Activated T-helper 1 cell treated with anti-CD3 and anti-CD28 coated beads, Interleukin-12 subunit alpha, Interleukin-12 subunit beta, Interleukin-2, Interleukin-4 antibody, amounts not matched to agents 30 ng/mL and 10 ng/mL and 1 ng/mL, durations not matched to agents 14 hours and 24 hours and 36 hours (primary cell): ENCODE measurements at regions of chr14 and their contacts with region 1.

Region 1: DNA sequence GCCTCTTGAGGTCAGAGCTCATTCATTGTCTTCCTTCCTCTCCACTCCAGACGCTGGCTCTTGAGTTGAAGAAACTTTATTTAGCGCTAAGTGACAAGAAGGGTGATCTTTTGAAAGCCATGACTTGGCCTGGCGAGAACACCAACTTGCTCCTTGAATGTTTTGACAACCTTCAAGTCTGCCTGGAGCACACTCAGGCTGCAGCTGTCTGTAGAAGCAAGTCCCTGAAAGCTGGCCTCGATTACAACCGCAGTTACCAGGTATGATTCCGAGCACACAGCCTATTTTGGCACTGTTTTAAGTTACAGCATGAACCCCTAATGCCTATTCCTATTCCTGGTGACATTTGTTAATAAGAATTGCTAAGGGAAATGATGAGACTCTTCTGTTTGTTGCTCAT is 167.6 kb downstream of the ESR2 start:
- DNase-seq: no peak
- H3K4me3 Mint-ChIP-seq: no peak overlapping the region
- H3K27ac Mint-ChIP-seq: no peak overlapping the region
- H3K4me1 Mint-ChIP-seq: no peaks in the 10 kb centered on the region
- H3K27me3 Mint-ChIP-seq: no peaks in the 10 kb centered on the region

Region 2: GRCh38 chr14:63795532-63795931 is 331.0 kb before region 1 on chr14:
- intact Hi-C with region 1: loop called (anchors 5 kb)
- DNase-seq: no peak
- H3K4me3 Mint-ChIP-seq: no peak overlapping the region
- H3K27ac Mint-ChIP-seq: no peak overlapping the region
- H3K4me1 Mint-ChIP-seq: peaks cover 5% of the 10 kb centered on the region
- H3K27me3 Mint-ChIP-seq: peaks cover 27% of the 10 kb centered on the region